OCI-LY7 (cell line): ENCODE measurements at regions of chr22 and their contacts with region 1.

Region 1: DNA sequence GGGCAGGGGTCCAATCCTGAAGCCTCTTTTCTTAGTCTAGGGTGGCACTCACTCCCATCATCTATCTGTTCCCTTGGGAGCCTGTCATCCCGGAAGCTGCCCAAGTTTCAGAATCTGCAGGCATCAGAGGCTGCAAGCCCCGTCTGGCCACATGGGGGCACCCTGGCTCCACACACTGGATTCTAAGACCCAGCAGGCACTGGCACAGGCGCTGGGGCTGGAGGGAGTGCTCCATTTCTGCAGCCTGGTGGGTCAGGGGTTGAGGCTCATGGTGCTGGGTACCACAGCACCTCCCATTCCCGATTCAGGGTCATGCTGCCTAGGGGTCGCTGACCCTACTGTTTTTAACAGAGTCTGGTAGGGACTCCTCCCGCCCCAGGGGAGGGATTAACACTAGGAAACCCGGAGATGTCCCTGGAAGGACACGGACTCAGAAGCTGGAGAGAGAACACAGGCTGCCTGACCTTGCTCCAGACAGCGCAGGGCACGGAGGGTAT is 243.9 kb upstream of the SYN3 start:
- DNase-seq: peak; percentile 91
- H3K4me3 ChIP-seq: peak overlapping the region; percentile 10
- H3K27ac ChIP-seq: peak overlapping the region; percentile 100
- H3K4me1 ChIP-seq: peaks cover 65% of the 10 kb centered on the region
- CTCF ChIP-seq: peak; percentile 99

Region 2: DNA sequence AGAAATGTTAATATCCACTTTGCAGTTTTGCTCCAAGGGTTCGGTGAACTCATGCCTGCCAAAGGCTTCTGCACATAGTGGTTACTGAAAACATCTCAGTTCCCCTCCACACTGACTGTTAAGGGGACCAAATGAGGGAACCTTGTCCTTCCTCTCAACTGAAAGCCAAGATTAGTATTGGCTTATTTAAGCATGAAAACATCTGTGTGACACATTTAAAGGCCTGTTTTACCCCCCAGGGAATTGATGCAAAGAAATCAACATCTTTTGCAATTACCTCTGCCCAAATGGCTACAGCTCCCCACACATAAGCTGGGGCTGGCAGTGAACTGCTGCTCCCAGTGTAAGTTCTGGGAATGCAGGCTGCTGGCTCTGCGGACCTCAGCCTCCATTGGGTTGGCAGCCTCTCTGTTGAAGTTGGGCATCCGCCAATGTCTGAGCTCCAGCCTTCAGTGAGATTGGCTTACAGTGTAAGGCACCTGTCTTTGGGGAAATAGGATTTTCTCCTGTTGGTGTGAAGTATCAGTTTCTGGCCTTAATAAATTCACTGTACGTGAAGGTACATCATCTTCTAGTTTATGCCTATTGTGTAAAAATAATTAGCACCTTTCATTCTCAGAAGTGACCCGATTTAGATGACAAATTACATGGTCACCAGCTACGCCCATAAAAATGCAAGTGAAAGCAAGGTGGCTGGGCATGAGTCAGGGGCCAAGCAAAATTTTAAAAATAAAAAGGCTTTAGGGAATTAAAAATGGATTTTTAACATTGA is 30.5 kb before region 1 on chr22:
- CTCF ChIA-PET with region 1: interaction called, 10 read pairs
- POLR2A ChIA-PET with region 1: interaction called, 62 read pairs
- intact Hi-C with region 1: loop called (anchors 1 kb)
- DNase-seq: peak; percentile 99
- H3K4me3 ChIP-seq: peak overlapping the region; percentile 53
- H3K27ac ChIP-seq: peak overlapping the region; percentile 99
- H3K4me1 ChIP-seq: peaks cover 74% of the 10 kb centered on the region
- CTCF ChIP-seq: peak; percentile 45

Region 3: DNA sequence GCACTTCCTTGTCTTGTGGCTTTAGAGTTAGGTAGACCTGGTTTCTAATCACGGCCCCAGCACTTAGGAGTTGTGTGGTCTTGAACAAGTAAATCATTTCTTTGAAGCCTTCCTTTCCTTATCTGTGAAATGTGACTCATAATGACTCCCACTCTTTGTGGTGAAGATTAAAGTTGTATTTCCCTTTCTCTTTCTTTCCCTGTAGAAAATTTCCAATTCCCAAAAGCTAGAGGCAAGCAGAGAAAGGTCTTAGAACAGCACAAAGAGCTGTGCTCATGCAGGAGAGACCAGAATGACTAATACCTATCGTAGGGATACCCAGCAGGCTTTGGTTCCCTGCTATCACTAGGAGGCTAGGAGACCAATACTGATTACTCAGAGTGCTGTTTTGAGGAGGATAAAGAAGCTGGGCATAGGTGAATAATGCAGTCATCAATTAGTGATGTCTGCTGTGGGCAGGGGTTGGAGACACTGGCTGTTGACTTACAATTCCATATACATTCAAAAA is 26.7 kb after region 1 on chr22:
- CTCF ChIA-PET with region 1: interaction called, 9 read pairs
- POLR2A ChIA-PET with region 1: interaction called, 10 read pairs
- intact Hi-C with region 1: no loop called
- DNase-seq: no peak
- H3K4me3 ChIP-seq: no peak overlapping the region
- H3K27ac ChIP-seq: no peak overlapping the region
- H3K4me1 ChIP-seq: peaks cover 41% of the 10 kb centered on the region
- CTCF ChIP-seq: no peak

Region 4: DNA sequence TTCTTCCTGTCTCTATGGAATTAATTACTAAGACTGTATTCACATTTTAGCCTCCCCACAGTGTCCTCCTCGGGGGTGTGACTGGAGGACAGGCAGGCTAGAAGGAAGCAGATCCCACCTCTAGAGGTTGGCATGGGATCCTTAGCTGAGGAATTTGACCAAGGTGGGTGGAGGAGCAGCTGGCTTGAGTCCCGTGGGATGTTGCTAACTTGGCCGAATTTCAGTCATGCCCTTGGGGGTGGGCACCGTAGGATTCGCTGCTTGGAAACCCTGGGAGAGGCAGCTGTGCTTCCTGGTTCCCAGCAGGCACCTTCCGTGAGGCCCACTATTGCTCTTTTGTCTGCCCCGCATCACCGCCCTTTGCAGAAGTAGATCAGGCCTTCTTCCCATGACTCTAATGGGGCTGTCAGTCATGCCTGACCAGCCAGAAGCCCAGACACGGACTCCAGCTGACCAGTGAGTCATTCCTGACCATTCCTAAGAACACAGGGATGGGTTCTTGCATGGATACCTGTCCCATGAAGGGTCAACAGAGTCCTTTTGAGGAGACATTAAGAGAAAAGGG is 48.4 kb after region 1 on chr22:
- CTCF ChIA-PET with region 1: no interaction called
- POLR2A ChIA-PET with region 1: no interaction called
- intact Hi-C with region 1: no loop called
- DNase-seq: no peak
- H3K4me3 ChIP-seq: no peak overlapping the region
- H3K27ac ChIP-seq: no peak overlapping the region
- H3K4me1 ChIP-seq: no peaks in the 10 kb centered on the region
- CTCF ChIP-seq: no peak

Region 5: GRCh38 chr22:33472462-33473344 is 170.6 kb after region 1 on chr22:
- CTCF ChIA-PET with region 1: no interaction called
- POLR2A ChIA-PET with region 1: no interaction called
- intact Hi-C with region 1: no loop called
- DNase-seq: no peak
- H3K4me3 ChIP-seq: no peak overlapping the region
- H3K27ac ChIP-seq: no peak overlapping the region
- H3K4me1 ChIP-seq: peaks cover 5% of the 10 kb centered on the region
- CTCF ChIP-seq: no peak

Region 6: DNA sequence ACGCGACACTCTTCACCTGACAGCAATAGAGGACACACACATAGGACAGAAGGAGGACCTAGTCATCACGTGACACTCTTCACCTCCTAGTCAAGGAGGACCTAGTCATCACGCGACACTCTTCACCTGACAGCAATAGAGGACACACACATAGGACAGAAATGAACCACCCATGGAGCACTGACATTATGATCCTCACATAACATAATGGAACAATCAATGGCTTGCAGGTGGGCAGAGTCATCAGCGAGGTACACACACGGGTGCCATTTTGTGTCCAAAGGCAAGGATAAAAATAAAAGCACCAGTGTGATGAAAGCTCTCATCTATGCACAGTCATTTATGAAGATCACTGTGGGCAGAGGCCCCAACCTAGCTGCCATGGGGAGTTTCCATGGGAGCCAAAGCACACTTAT is 263.5 kb after region 1 on chr22:
- CTCF ChIA-PET with region 1: interaction called, 3 read pairs
- POLR2A ChIA-PET with region 1: interaction called, 9 read pairs
- intact Hi-C with region 1: loop called (anchors 2 kb)
- DNase-seq: no peak
- H3K4me3 ChIP-seq: no peak overlapping the region
- H3K27ac ChIP-seq: no peak overlapping the region
- H3K4me1 ChIP-seq: peaks cover 62% of the 10 kb centered on the region
- CTCF ChIP-seq: no peak

Region 7: GRCh38 chr22:33841281-33842005 is 539.3 kb after region 1 on chr22:
- CTCF ChIA-PET with region 1: no interaction called
- POLR2A ChIA-PET with region 1: no interaction called
- intact Hi-C with region 1: loop called (anchors 5 kb)
- DNase-seq: peak; percentile 76
- H3K4me3 ChIP-seq: peak overlapping the region; percentile 60
- H3K27ac ChIP-seq: peak overlapping the region; percentile 93
- H3K4me1 ChIP-seq: peaks cover 59% of the 10 kb centered on the region
- CTCF ChIP-seq: no peak